ENCODE measurements at regions of chr1 and their contacts with region 1.

Region 1: GRCh38 chr1:212035123-212035834 is at the starts of genes DTL and INTS7:
- DNase-seq: peak; percentile 99
- ATAC-seq: peak; percentile 87
- H3K4me3 ChIP-seq: peak within 1 kb of the TSS; percentile 77
- H3K27ac ChIP-seq: peak within 1 kb of the TSS; percentile 82
- H3K4me1 ChIP-seq: peaks cover 10% of the 10 kb centered on the region
- H3K27me3 ChIP-seq: no peaks in the 10 kb centered on the region
- CTCF ChIP-seq: peak; percentile 80
- POLR2A ChIP-seq: peak; percentile 82
- RAD21 ChIP-seq: no peak
- total RNA-seq, gene DTL: 16.7 and 19.9 TPM in 2 replicates
- total RNA-seq, gene INTS7: 20.3 and 24.9 TPM in 2 replicates

Region 2: DNA sequence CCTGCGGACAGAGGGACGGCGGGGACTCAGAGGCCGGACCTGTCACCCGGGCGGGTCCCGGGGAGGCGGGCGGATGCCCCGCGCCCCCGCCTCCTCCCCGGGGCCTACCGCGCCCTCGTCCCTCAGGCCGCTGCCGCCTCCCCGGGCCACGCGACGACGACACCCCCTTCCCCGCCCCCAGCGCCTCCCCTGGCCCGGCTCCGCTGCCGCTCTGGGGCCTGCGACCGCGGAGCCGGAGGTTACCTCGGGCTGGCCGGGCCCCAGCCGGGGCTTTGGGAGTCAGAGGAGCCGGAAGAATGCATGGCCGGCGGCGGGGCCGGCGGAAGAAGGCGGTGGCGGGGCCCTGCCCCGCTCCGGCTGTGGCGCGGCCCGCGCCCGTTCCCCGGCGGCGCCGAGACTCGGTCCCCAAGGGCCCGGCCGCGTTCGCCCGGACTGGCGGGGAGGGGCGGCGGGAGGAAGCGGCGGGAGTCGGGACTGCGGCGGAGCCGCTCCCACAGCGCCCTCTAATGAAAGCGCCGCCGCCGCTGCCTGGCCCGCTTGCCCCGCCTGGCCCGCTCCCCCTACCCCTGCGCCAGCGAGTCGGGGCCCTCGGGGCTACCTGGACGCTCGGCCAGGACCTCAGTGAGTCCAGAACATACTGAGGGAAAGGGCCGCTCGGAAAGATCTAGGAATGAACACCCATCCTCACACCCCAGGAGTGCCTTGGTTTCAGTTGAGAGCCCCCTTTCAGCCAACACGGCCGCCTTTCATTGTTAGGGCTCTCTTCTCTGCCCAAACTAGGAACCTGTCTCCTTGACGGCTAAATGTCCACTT is 204.7 kb before region 1 on chr1 and contains the start of gene LPGAT1:
- CTCF ChIA-PET with region 1: interaction called, 5 read pairs
- POLR2A ChIA-PET with region 1: no interaction called
- dilution Hi-C with region 1: no loop called
- in situ Hi-C with region 1: no loop called
- intact Hi-C with region 1: loop called (anchors 5 kb)
- DNase-seq: peak; percentile 52
- ATAC-seq: peak; percentile 91
- H3K4me3 ChIP-seq: peak within 1 kb of the TSS; percentile 81
- H3K27ac ChIP-seq: peak within 1 kb of the TSS; percentile 39
- H3K4me1 ChIP-seq: peaks cover 12% of the 10 kb centered on the region
- H3K27me3 ChIP-seq: no peaks in the 10 kb centered on the region
- CTCF ChIP-seq: peak; percentile 69
- POLR2A ChIP-seq: peak; percentile 56
- RAD21 ChIP-seq: peak; percentile 45
- total RNA-seq, gene LPGAT1: 13.6 and 25.6 TPM in 2 replicates

Region 3: DNA sequence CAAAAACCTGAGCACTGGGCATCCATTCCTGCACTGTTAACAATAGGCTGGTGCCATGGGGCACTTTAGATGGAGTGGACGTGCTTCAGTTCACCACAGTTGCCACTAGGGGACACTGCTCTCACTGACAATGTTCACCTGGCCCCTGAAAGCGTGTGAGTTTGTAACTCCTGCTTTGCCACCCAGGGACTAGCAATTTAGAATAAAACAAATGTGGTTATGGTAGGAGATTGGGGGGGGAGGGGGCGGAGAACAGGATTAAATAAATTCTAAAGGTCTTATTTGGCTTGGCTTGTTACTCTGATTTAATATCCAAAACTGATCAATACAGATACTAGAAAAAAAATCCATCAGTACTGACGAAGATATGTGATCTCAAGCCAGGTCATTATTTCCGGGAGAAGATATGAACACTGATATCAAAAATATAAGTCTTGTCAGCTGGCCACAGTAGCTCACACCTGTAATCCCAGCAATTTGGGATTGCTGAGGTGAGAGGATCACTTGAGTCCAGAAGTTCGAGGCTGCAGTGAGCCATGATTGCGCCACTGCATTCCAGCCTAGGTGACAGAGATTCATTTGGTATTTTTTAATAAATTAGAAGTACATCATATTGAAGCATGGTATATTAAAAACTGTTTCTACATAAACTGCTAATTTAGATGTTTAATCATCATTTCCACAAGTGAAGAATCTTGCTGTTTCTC is 23.1 kb before region 1 on chr1:
- CTCF ChIA-PET with region 1: interaction called, 13 read pairs
- POLR2A ChIA-PET with region 1: no interaction called
- dilution Hi-C with region 1: no loop called
- in situ Hi-C with region 1: no loop called
- intact Hi-C with region 1: loop called (anchors 2 kb)
- DNase-seq: peak; percentile 65
- ATAC-seq: peak; percentile 98
- H3K4me3 ChIP-seq: no peak overlapping the region
- H3K27ac ChIP-seq: no peak overlapping the region
- H3K4me1 ChIP-seq: peaks cover 1% of the 10 kb centered on the region; the same call in 1 of the 2 replicates
- H3K27me3 ChIP-seq: no peaks in the 10 kb centered on the region
- CTCF ChIP-seq: peak; percentile 89
- POLR2A ChIP-seq: no peak
- RAD21 ChIP-seq: peak; percentile 80

Measured in IMR-90 (cell line).